ENCODE measurements at regions of chr7 and their contacts with region 1.

Region 1: DNA sequence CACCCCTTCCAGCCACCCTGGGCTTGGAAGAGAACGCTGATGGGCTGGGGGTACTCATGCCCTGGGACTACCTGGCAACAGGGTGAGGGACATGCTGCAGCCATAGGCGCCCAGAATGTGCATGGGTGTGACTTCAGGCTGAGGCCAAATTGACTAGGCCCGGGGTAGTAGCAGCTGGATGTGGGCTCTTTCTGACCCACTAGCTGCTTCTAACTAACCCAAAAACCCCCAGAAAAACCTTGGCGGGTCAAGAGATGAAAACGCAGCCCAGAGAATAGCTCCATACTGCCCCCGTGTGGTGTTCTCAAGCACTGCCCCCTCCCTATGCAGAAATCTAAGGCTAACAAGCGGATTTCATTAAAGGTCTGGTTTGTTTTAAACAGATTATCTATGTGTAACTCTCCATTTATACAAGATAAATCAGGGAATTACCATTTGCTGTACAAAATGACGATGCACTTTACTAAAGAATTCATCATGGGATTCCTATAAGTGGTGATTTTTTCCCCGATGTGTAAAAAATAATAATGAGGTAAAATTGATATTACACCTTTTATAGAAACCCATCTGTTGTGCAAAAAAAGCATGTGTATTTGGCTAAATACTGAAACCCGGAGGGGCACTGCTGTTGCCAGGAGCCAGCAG is 4.2 kb downstream of the SMARCD3 start:
- DNase-seq: peak; percentile 93
- H3K4me3 ChIP-seq: peak overlapping the region; percentile 39 to 46; a peak in 2 of 4 replicates
- H3K27ac ChIP-seq: peak overlapping the region in 1 of 2 experiments; percentile 59; a peak in 1 of 4 replicates
- H3K4me1 ChIP-seq: peaks cover 35 to 45% of the 10 kb centered on the region in 2 experiments
- H3K27me3 ChIP-seq: no peaks in the 10 kb centered on the region
- CTCF ChIP-seq: peak; percentile 100
- EP300 ChIP-seq: peak in 1 of 2 experiments; percentile 59; a peak in 2 of 4 replicates
- RAD21 ChIP-seq: peak; percentile 77

Region 2: DNA sequence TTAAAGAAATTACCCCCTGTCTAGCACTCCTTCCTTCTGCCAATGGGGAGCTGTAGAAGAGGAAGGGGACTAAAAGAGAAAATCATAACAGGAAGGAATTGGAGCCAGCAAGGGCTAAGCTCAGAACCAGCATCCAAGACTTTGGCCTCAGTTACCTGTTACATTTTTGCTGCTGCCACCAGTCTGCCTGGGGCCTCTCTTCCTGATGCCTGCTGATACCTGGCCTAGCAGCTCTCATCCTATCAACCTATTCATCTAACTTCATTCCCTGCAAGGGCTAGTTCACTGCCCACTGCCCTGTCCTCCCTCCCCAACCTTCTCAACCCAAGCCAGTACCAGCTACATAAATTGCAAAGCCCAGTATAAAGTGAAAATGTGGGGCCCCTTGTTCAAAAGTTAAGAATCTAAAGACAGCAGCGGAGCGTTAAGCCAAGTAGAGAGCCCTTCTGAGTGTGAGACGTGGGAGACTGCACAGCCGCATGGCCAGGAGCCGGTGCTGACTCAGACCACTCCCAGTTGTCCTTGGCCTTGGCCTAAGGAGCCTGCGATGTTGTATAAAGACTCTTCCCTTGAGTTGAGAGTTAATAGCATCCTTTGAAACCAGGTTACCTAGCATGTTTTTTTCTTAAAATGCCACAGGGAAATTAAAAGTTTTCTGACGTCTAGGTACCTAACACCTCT is 405.2 kb before region 1 on chr7:
- CTCF ChIA-PET with region 1: no interaction called
- POLR2A ChIA-PET with region 1: no interaction called
- DNase-seq: no peak
- H3K4me3 ChIP-seq: no peak overlapping the region
- H3K27ac ChIP-seq: no peak overlapping the region
- H3K4me1 ChIP-seq: peaks cover 0 to 4% of the 10 kb centered on the region in 2 experiments; a peak in 1 of 4 replicates
- H3K27me3 ChIP-seq: peaks cover 12% of the 10 kb centered on the region; the same call in 1 of the 2 replicates
- CTCF ChIP-seq: no peak
- EP300 ChIP-seq: no peak
- RAD21 ChIP-seq: no peak

Region 3: DNA sequence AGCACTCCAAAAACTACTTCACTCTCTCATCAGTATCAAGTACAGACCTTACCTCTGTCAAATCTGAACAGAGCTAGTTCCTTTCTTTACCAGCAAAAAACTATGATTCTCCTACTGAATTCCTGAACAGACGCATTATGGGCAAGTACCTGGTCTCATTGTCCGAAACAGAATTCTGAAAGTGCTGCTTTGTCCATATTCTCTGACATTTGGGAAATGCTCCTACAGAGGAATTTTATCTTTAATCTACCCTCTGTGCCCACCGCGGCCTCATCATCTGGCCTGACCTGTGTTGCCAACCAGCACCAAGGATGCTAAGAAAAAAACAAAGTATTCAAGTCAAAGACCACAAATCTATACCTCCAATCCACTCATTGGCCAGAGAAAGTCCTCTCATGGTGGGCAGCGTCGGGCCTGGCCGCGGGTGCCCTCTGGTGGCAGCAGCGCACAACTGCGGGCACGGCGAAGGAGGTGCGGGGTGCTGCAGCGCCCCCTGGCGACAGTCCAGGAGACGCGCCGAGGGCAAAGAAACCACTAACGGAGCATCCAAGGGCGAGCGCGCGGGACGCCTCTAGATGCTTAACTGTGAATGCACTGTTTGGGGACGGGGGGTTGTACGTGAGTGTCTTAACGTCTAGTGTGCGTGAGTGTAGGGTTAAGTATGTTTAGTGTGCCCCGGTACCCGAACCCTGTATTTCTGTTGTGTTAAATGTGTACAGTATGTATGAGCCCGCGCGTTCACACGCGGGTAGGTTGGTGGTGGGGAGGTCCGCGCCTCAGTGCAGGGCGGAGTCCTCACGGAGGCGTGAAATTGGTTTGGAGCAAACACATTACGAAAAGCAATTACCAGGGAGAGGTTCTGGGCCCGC is 71.8 kb before region 1 on chr7:
- CTCF ChIA-PET with region 1: interaction called, 15 read pairs
- POLR2A ChIA-PET with region 1: no interaction called
- DNase-seq: peak; percentile 97
- H3K4me3 ChIP-seq: peak overlapping the region in 1 of 2 experiments; percentile 48; a peak in 1 of 4 replicates
- H3K27ac ChIP-seq: no peak overlapping the region
- H3K4me1 ChIP-seq: peaks cover 0 to 4% of the 10 kb centered on the region in 2 experiments; a peak in 1 of 4 replicates
- H3K27me3 ChIP-seq: peaks cover 60% of the 10 kb centered on the region
- CTCF ChIP-seq: peak; percentile 100
- EP300 ChIP-seq: no peak
- RAD21 ChIP-seq: peak; percentile 97

Region 4: DNA sequence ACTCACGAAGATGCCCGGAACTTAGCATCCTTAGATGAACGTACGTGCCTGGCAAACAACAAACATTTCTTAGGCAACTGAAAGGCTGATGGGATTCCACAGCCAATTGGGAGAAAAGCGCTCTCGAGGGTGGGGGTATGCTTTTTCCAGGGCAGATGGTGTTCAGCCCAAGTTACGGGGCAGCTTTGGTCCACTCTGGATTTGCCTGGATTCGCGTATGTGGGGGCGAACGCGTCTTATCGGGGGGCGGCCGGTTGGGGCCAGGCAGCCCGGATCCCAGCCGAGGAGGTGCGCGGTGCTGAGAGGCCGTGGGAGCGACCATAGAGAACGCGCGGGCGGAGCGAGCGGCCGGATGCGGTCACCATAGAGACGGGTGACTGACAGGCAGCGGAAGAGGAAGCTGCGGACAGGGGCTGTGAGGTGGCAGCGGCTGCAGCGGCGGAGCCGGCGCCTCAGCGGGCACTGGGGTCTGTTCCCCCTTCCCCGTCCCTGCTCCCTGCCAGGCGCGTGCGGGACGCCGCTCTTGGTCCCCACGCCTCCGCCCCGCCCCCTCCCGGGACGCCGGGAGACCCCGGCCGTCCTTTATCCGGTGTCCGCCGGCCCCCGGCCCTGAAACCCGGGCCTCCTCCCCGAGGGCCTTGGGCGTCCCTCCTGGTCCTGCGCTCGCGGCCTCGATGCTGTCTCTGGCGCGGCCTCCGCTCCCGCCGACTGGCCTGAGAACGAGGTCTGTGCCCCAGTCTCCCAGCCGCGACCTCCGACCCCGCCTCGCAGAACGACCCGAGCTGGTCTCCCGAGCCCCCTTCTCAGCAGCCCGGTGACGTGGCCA is 12.0 kb before region 1 on chr7 and contains the start of gene CHPF2:
- CTCF ChIA-PET with region 1: interaction called, 122 read pairs
- POLR2A ChIA-PET with region 1: interaction called, 20 read pairs
- DNase-seq: peak; percentile 99
- H3K4me3 ChIP-seq: peak within 1 kb of the TSS; percentile 95 to 100
- H3K27ac ChIP-seq: peak within 1 kb of the TSS; percentile 84 to 91
- H3K4me1 ChIP-seq: peaks cover 9 to 26% of the 10 kb centered on the region in 2 experiments
- H3K27me3 ChIP-seq: no peaks in the 10 kb centered on the region
- CTCF ChIP-seq: 0 out of 2 replicates have a peak, but pooled peaks have one; percentile 11
- EP300 ChIP-seq: no peak
- RAD21 ChIP-seq: no peak
- polyA plus RNA-seq, gene CHPF2: 60.4 and 68.6 TPM in 2 replicates

Region 5: GRCh38 chr7:151271699-151272355 is 27.5 kb after region 1 on chr7:
- CTCF ChIA-PET with region 1: interaction called, 14 read pairs
- POLR2A ChIA-PET with region 1: interaction called, 3 read pairs
- DNase-seq: no peak
- H3K4me3 ChIP-seq: no peak overlapping the region
- H3K27ac ChIP-seq: no peak overlapping the region
- H3K4me1 ChIP-seq: peaks cover 0 to 7% of the 10 kb centered on the region in 2 experiments; a peak in 1 of 4 replicates
- H3K27me3 ChIP-seq: no peaks in the 10 kb centered on the region
- CTCF ChIP-seq: no peak
- EP300 ChIP-seq: no peak
- RAD21 ChIP-seq: no peak

Region 6: DNA sequence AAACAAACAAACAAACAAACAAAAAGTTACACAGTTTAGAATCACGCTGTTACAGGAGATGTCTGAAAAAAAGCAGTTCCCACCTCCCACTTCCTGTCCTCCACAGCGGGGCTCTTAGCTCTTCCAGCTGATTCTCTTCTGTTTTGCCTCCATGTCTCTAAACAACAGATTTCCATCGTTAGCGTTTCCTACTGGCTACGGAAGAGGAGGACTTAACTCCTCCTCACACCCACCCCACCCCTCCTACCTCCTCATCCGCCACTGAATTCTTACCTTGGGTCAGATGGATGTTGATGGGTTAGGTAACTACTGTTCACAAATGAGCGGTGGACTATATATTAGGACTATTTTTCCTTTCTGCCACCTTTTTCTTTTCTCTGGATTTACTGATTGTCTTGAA is 60.5 kb after region 1 on chr7:
- CTCF ChIA-PET with region 1: interaction called, 74 read pairs
- POLR2A ChIA-PET with region 1: no interaction called
- DNase-seq: no peak
- H3K4me3 ChIP-seq: no peak overlapping the region
- H3K27ac ChIP-seq: no peak overlapping the region
- H3K4me1 ChIP-seq: peaks cover 0 to 3% of the 10 kb centered on the region in 2 experiments; a peak in 1 of 4 replicates
- H3K27me3 ChIP-seq: peaks cover 38% of the 10 kb centered on the region
- CTCF ChIP-seq: no peak
- EP300 ChIP-seq: no peak
- RAD21 ChIP-seq: no peak

Measured in SK-N-SH (cell line).